ENCODE measurements at regions of chr18 and their contacts with region 1.

Region 1: GRCh38 chr18:47204908-47205522 is 28.9 kb upstream of the IER3IP1 start:
- DNase-seq: peak in 1 of 5 donors; percentile 8
- ATAC-seq: peak in 3 of 4 donors; percentile 39 to 60 (median 57)
- H3K4me3 ChIP-seq: no peak overlapping the region
- H3K27ac ChIP-seq: no peak overlapping the region
- H3K4me1 ChIP-seq: peaks cover 0 to 11% (median 0%) of the 10 kb centered on the region in 12 donors
- H3K27me3 ChIP-seq: peaks cover 0 to 11% (median 5%) of the 10 kb centered on the region in 9 donors
- CTCF ChIP-seq: peak; percentile 48 to 79 (median 74)
- POLR2A ChIP-seq: no peak

Region 2: DNA sequence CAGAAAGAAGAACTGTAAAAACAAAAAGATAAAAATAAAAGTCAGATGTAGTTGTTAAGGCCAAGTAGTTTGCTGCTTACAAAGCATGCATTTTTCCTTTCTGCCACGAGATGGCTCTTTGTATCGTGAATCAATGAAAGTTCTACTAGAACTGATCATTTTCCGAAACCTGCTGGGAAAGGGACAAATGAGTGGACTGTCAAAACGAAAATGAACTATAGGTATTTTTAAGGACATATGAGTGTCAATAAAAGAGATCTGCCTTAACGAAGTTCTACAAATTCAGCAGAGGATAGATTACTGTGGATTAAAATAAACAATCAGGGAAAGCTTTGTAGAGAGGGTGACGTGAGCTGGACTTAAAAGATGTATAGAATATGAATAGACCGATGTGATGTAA is 154.5 kb before region 1 on chr18:
- intact Hi-C with region 1: loop called in 4 of 10 experiments (anchors 5 kb)
- DNase-seq: peak in 1 of 5 donors; percentile 23
- ATAC-seq: no peak
- H3K4me3 ChIP-seq: no peak overlapping the region
- H3K27ac ChIP-seq: no peak overlapping the region
- H3K4me1 ChIP-seq: peaks cover 0 to 3% (median 0%) of the 10 kb centered on the region in 12 donors
- H3K27me3 ChIP-seq: no peaks in the 10 kb centered on the region
- CTCF ChIP-seq: peak; percentile 37 to 71 (median 58)
- POLR2A ChIP-seq: no peak

Region 3: DNA sequence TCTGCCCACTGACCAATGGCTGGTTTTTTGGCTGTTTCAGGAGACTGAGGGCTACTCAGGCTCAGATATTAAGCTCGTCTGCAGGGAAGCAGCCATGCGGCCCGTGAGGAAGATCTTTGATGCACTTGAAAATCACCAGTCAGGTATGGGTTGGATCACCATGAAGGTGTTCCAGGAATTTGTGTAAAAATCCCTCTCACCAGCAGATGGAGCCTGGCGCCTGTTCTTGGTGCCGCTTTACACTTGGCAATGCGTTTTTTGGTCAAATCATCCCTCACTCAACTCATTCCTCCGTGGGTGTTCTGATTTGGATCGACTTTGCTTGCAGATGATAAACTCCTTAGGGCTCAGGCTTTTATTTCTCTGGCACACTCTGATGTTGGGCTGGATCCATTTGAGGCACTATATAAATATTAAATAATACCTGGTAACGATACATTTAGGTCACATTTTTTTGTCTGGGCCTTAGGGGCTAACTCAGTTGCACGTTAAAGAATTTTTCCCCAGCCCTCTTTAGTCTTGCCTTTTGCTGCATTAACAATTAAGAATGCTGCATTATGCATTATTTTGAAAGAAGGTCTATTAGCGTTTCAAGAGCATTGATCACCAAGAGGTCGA is 104.7 kb before region 1 on chr18:
- intact Hi-C with region 1: loop called (anchors 1 to 5 kb)
- DNase-seq: peak in 3 of 5 donors; percentile 20 to 31 (median 25)
- ATAC-seq: peak in 3 of 4 donors; percentile 47 to 79 (median 59)
- H3K4me3 ChIP-seq: no peak overlapping the region
- H3K27ac ChIP-seq: no peak overlapping the region
- H3K4me1 ChIP-seq: peaks cover 0 to 5% (median 0%) of the 10 kb centered on the region in 12 donors
- H3K27me3 ChIP-seq: no peaks in the 10 kb centered on the region
- CTCF ChIP-seq: peak; percentile 64 to 84 (median 72)
- POLR2A ChIP-seq: no peak

Region 4: GRCh38 chr18:47150029-47150823 is 54.8 kb before region 1 on chr18 and contains the start of gene HDHD2:
- intact Hi-C with region 1: no loop called
- DNase-seq: peak; percentile 88 to 95 (median 90)
- ATAC-seq: peak; percentile 93 to 98 (median 96)
- H3K4me3 ChIP-seq: peak within 1 kb of the TSS; percentile 29 to 89 (median 73)
- H3K27ac ChIP-seq: peak within 1 kb of the TSS; percentile 87 to 98 (median 94)
- H3K4me1 ChIP-seq: peaks cover 3 to 42% (median 20%) of the 10 kb centered on the region in 12 donors
- H3K27me3 ChIP-seq: no peaks in the 10 kb centered on the region
- CTCF ChIP-seq: peak in 4 of 12 donors; percentile 7 to 15 (median 10)
- POLR2A ChIP-seq: peak in 1 of 2 donors; percentile 79
- total RNA-seq, gene HDHD2: 16.8 to 50.8 (median 40.6) TPM

Region 5: GRCh38 chr18:47263430-47264307 is 58.7 kb after region 1 on chr18:
- intact Hi-C with region 1: no loop called
- DNase-seq: peak in 1 of 5 donors; percentile 46
- ATAC-seq: no peak
- H3K4me3 ChIP-seq: peak overlapping the region in 6 of 12 donors; percentile 3 to 24 (median 12)
- H3K27ac ChIP-seq: no peak overlapping the region
- H3K4me1 ChIP-seq: peaks cover 0 to 20% (median 0%) of the 10 kb centered on the region in 12 donors
- H3K27me3 ChIP-seq: peaks cover 38 to 100% (median 77%) of the 10 kb centered on the region in 9 donors
- CTCF ChIP-seq: peak in 2 of 12 donors; percentile 13 to 21
- POLR2A ChIP-seq: no peak